Thyroid gland (tissue), 4 donors: ENCODE measurements at regions of chr11 and their contacts with region 1.

Region 1: DNA sequence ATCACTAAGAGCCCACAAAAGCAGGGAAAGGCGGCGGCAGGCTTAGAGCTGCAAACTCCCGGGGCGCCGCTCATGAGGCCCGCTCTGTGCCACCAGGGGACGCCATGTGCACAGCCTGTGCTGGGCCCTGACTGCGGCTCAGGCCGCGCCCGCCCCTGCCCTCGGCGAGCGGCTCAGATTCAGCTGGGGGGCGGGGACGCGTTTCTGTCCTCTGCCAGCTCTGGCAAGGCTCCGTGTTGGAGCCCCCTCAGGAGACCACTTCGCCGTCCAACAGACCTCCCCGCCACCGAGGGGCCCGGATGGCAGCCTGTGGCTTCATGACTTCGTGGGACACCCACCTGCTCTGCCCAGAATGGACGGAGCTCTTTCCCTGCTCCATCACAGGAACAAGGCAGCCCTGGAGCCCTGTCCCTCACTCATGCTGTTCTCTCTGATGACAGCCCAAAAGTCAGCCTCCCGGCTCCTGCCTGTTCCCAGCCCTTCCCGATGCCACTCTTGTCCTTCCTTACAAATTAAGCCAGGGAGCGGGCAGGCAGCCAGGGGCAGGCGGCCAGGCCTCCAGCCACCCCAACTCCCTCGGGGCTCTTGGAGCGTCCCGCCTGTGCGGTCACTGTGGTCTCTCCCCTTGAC is 69.1 kb downstream of the NAT10 start:
- DNase-seq: peak; percentile 88 to 90
- H3K4me3 ChIP-seq: peak overlapping the region in 1 of 3 donors; percentile 13
- H3K27ac ChIP-seq: peak overlapping the region in 1 of 3 donors; percentile 40
- H3K4me1 ChIP-seq: peaks cover 5 to 12% of the 10 kb centered on the region in 2 donors
- H3K27me3 ChIP-seq: no peaks in the 10 kb centered on the region
- CTCF ChIP-seq: peak; percentile 88 to 99 (median 94)
- POLR2A ChIP-seq: no peak

Region 2: GRCh38 chr11:33778675-33779074 is 395.9 kb before region 1 on chr11:
- intact Hi-C with region 1: no loop called
- DNase-seq: no peak
- H3K4me3 ChIP-seq: no peak overlapping the region
- H3K27ac ChIP-seq: no peak overlapping the region
- H3K4me1 ChIP-seq: peaks cover 0 to 8% of the 10 kb centered on the region in 2 donors
- H3K27me3 ChIP-seq: no peaks in the 10 kb centered on the region
- CTCF ChIP-seq: no peak
- POLR2A ChIP-seq: no peak

Region 3: GRCh38 chr11:34280945-34281872 is 106.7 kb after region 1 on chr11:
- intact Hi-C with region 1: no loop called
- DNase-seq: no peak
- H3K4me3 ChIP-seq: no peak overlapping the region
- H3K27ac ChIP-seq: no peak overlapping the region
- H3K4me1 ChIP-seq: no peaks in the 10 kb centered on the region
- H3K27me3 ChIP-seq: no peaks in the 10 kb centered on the region
- CTCF ChIP-seq: no peak
- POLR2A ChIP-seq: no peak

Region 4: DNA sequence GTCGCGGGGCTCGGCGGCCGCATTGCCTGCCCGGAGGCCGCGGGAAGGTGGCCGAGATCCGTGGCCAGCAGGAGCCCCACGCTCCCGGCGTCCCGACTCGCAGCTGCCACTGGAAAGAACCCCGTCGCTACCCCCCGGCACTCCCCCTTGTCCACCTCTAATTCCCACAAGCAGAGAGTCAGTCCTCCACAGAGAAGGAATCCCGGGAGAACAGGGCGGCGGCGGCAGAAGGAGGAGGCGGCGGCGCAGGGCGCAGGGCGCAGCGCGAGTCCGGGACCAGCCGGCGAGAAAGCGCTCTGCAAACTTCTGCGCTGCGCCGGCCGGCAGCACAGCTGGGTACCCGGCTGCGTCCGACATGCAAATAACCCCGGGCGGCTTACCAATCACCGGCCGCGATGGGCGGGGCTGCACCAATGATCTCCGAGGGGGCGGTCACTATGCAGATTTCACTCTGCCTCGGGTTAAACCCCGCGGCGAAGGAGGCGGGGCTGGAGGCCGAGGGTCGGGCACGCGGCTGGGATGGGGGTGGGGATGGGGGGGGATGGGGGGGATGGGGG is 183.3 kb after region 1 on chr11 and contains the start of gene ABTB2:
- intact Hi-C with region 1: loop called (anchors 2 kb)
- DNase-seq: peak; percentile 99
- H3K4me3 ChIP-seq: peak within 1 kb of the TSS; percentile 29 to 35 (median 34)
- H3K27ac ChIP-seq: peak within 1 kb of the TSS; percentile 19 to 75 (median 47)
- H3K4me1 ChIP-seq: peaks cover 15 to 20% of the 10 kb centered on the region in 2 donors
- H3K27me3 ChIP-seq: no peaks in the 10 kb centered on the region
- CTCF ChIP-seq: peak in 1 of 6 experiments; percentile 21
- POLR2A ChIP-seq: peak; percentile 68 to 99
- total RNA-seq, gene ABTB2: 1.2 to 5.0 (median 3.3) TPM

Region 5: GRCh38 chr11:34366522-34366921 is 192.0 kb after region 1 on chr11:
- intact Hi-C with region 1: loop called (anchors 2 kb)
- DNase-seq: peak; percentile 13 to 24
- H3K4me3 ChIP-seq: no peak overlapping the region
- H3K27ac ChIP-seq: no peak overlapping the region
- H3K4me1 ChIP-seq: no peaks in the 10 kb centered on the region
- H3K27me3 ChIP-seq: no peaks in the 10 kb centered on the region
- CTCF ChIP-seq: peak in 2 of 6 experiments; percentile 28 to 38
- POLR2A ChIP-seq: no peak

Region 6: DNA sequence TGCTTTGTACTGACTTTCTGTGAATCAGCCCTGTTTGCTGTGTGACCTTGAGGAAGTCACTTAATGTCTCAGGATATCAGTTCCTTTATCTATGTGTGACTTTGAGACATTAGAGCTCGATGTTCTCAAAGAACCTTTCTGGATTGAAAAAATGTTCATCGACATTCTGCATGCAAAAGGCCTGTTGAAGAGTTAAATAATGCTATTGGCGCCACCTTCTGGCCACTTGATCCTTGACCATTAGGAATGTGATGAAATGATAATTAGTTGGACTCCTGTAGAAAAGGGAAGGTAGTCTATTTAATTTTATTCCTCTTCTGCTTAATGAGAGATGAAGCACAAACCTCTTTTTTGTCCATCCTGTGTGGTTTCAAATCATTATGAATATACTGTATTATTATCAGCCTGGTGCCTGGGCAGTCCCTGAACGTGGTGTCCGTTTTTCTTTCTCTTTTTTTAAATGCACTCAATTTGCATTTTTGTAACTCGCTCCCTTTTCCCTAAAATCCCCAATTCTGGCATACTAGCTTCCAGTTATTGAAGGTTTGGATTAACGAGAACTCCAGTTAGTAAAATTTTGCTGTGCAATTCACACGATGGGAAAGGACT is 318.4 kb after region 1 on chr11:
- intact Hi-C with region 1: loop called (anchors 10 kb)
- DNase-seq: peak; percentile 71 to 76
- H3K4me3 ChIP-seq: no peak overlapping the region
- H3K27ac ChIP-seq: no peak overlapping the region
- H3K4me1 ChIP-seq: peaks cover 9 to 20% of the 10 kb centered on the region in 2 donors
- H3K27me3 ChIP-seq: no peaks in the 10 kb centered on the region
- CTCF ChIP-seq: peak; percentile 23 to 72 (median 70)
- POLR2A ChIP-seq: no peak